ENCODE measurements at regions of chr1 and their contacts with region 1.

Region 1: GRCh38 chr1:85109475-85109874 is 61.2 kb upstream of the MCOLN3 start:
- DNase-seq: no peak

Region 2: DNA sequence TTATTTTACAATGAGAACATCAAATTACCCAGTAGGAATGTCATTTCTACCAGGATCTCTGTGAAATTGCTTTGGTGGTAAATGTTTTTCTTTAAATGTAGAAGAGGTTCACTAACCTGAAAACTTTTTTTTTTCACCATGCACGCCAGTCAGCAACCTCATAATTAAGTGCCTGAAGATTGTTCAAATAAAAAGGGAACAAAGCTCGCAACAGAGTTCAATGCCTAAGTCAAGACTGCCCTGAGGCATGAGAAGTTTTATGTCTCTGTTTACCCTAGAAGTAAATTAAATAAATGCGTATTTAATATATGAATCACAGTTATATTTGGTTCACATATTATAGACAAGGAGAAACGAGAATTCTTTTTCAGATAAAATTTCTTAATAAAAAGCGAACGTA is 105.2 kb after region 1 on chr1:
- intact Hi-C with region 1: no loop called
- DNase-seq: no peak

Region 3: DNA sequence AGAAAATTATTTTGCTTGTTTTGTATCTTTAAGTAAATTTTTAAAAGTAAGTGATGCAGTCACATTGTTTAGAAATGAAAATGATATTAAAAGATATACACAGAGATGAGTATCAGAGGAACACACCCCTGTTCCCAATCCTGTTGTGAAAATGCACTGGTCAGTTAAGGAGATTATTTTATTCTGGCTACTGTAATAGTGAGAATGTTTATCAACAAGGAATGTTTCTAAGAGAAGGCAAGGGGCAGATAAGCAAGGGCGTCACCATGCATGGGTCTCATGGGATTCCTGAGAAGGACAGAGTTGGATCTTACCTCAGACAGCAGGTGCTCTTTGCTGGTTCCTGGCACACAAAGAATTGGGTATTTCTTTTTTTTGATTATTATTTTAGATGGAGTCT is 128.1 kb after region 1 on chr1:
- intact Hi-C with region 1: loop called (anchors 5 kb)
- DNase-seq: no peak

Region 4: DNA sequence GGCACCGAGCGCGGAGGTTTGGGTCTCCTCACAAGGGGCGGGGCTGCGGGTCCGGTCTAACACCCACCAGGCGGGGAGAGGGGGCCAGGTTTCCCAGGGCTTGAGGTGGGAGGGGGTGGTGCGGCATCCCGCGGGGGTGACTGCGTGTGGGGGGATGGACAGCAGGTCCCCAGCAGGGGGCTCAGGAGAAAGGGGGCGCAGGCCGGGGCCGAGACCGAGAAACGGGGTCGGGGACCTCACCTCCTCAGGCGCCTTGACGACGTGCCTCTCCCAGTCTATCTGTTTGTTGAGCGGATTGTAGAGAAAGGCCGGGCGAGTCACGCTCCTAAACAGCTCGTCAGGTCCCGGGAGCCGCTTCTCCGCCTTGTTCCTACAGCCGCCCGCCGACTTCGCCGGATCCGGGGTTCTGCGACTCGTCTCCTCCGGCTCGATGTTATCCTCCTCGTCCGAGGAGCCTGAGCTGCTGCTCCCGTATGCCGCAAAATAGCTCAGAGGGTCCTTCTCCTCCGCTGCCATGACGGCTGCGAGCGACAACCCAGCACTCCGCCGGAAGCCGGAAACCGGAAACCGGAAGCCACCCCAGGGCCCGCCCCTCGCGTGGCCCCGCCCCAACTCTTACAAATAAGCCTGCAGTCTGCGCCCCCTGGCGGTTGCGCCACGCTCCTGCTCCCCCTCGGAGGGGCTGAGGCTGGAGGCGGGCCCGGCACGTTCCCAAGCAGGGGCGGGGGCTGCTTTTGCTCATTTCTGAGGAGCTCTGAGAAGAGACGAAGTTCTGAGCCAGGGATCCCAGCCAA is 149.8 kb after region 1 on chr1 and contains the start of gene C1orf52:
- intact Hi-C with region 1: loop called (anchors 5 kb)
- DNase-seq: peak; percentile 97
- total RNA-seq, gene C1orf52: 17.4 TPM

Region 5: DNA sequence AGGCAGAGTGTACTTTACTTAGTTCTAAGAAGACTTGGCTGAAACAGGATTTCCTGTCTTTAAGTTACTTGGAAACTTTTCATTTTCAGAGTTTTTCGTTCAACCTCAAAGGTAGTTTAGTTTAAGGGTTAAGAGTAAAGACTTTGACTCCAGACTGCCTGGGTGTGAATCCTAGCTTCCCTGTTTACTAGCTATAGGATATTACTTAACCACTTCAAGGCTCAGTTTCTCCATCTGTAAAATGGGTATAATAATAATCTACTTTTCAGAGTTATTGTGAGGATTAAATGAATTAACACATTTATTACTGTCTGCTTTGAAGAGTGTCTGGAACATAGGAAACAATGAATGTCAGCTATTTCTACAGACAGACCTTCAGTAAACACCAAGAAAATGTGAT is 568.7 kb after region 1 on chr1:
- intact Hi-C with region 1: no loop called
- DNase-seq: no peak